B cell (primary cell): ENCODE measurements at regions of chr1 and their contacts with region 1.

Region 1: GRCh38 chr1:26535201-26535600 is 5.6 kb downstream of the RPS6KA1 start:
- DNase-seq: peak; percentile 18
- ATAC-seq: no peak
- H3K4me3 ChIP-seq: no peak overlapping the region
- H3K4me3 Mint-ChIP-seq: peak overlapping the region; percentile 3
- H3K27ac ChIP-seq: no peak overlapping the region
- H3K27ac Mint-ChIP-seq: peak overlapping the region; percentile 28
- H3K4me1 ChIP-seq: peaks cover 58 to 68% of the 10 kb centered on the region in 2 donors
- H3K4me1 Mint-ChIP-seq: peaks cover 71% of the 10 kb centered on the region
- H3K27me3 ChIP-seq: no peaks in the 10 kb centered on the region
- H3K27me3 Mint-ChIP-seq: no peaks in the 10 kb centered on the region
- CTCF ChIP-seq: no peak

Region 2: GRCh38 chr1:27507960-27508665 is 972.9 kb after region 1 on chr1:
- CTCF ChIA-PET with region 1: no interaction called
- POLR2A ChIA-PET with region 1: interaction called, 13 read pairs
- intact Hi-C with region 1: no loop called
- DNase-seq: no peak
- ATAC-seq: no peak
- H3K4me3 ChIP-seq: no peak overlapping the region
- H3K4me3 Mint-ChIP-seq: no peak overlapping the region
- H3K27ac ChIP-seq: no peak overlapping the region
- H3K27ac Mint-ChIP-seq: peak overlapping the region; percentile 68
- H3K4me1 ChIP-seq: no peaks in the 10 kb centered on the region
- H3K4me1 Mint-ChIP-seq: peaks cover 3% of the 10 kb centered on the region
- H3K27me3 ChIP-seq: no peaks in the 10 kb centered on the region
- H3K27me3 Mint-ChIP-seq: no peaks in the 10 kb centered on the region
- CTCF ChIP-seq: no peak